Endothelial cell of umbilical vein (primary cell): ENCODE measurements at regions of chr4 and their contacts with region 1.

Region 1: DNA sequence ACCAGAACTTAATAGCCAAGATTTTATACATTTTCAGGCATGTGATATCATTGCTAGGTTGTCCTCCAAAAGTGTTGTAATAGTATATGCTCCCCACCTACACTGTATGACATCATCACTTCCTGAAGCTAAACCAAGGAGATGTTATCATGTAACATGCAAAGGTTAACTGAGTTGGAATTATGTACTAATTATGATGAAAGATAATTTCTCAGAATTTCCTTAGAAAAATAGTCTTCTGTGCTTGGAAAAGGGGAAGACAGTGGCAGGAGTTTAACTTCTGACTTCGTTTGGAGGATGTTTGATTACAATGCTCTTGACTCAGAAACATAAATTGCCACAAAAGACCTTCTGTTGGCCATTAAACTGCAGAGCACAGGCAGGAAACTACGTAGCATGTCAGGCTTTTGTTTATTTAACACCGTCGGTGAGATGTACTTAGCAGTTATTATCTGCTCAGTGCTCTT is 83.6 kb upstream of the GUCY1A1 start:
- DNase-seq: peak; percentile 91
- H3K4me3 ChIP-seq: peak overlapping the region in 1 of 3 experiments; percentile 22
- H3K27ac ChIP-seq: peak overlapping the region; percentile 60
- H3K4me1 ChIP-seq: peaks cover 20% of the 10 kb centered on the region
- H3K27me3 ChIP-seq: no peaks in the 10 kb centered on the region
- CTCF ChIP-seq: no peak
- POLR2A ChIP-seq: no peak

Region 2: GRCh38 chr4:155473420-155474095 is 109.4 kb before region 1 on chr4:
- CTCF ChIA-PET with region 1: no interaction called
- POLR2A ChIA-PET with region 1: no interaction called
- dilution Hi-C with region 1: no loop called
- intact Hi-C with region 1: loop called (anchors 1 kb)
- DNase-seq: peak; percentile 93
- H3K4me3 ChIP-seq: no peak overlapping the region
- H3K27ac ChIP-seq: peak overlapping the region; percentile 13
- H3K4me1 ChIP-seq: peaks cover 16% of the 10 kb centered on the region
- H3K27me3 ChIP-seq: no peaks in the 10 kb centered on the region
- CTCF ChIP-seq: no peak
- POLR2A ChIP-seq: no peak

Region 3: DNA sequence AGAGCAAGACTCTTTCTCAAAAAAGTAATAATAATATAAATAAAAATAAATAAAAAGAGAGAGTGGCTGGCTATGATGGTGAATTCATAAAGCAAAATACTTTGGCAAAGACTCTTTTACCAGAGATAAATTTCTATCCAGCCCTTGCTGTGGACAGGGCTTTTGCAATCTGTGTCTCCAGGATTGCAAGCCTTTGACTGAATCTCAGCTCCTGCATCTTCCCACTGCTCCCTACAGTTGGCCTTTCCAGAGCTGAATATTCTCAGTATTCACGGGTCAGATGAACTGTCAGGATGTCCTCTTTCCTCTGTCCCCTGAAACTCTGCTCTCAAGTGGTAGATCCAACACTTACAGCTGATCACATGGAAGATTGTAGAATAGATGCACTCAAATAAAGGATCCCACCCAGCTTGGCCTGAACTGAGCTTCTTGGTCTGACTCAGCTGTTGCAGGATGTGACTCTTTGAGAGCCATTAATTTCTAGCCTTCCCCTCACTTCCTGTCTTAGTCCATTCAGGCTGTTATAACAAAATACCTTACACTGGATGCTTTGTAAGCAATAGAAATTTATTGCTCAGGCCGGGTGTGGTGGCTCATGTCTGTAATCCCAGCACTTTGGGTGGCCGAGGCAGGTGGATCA is 39.8 kb before region 1 on chr4:
- CTCF ChIA-PET with region 1: interaction called, 3 read pairs
- POLR2A ChIA-PET with region 1: no interaction called
- dilution Hi-C with region 1: no loop called
- intact Hi-C with region 1: loop called (anchors 2 kb)
- DNase-seq: peak; percentile 95
- H3K4me3 ChIP-seq: no peak overlapping the region
- H3K27ac ChIP-seq: peak overlapping the region; percentile 39
- H3K4me1 ChIP-seq: peaks cover 9% of the 10 kb centered on the region
- H3K27me3 ChIP-seq: no peaks in the 10 kb centered on the region
- CTCF ChIP-seq: no peak
- POLR2A ChIP-seq: no peak

Region 4: DNA sequence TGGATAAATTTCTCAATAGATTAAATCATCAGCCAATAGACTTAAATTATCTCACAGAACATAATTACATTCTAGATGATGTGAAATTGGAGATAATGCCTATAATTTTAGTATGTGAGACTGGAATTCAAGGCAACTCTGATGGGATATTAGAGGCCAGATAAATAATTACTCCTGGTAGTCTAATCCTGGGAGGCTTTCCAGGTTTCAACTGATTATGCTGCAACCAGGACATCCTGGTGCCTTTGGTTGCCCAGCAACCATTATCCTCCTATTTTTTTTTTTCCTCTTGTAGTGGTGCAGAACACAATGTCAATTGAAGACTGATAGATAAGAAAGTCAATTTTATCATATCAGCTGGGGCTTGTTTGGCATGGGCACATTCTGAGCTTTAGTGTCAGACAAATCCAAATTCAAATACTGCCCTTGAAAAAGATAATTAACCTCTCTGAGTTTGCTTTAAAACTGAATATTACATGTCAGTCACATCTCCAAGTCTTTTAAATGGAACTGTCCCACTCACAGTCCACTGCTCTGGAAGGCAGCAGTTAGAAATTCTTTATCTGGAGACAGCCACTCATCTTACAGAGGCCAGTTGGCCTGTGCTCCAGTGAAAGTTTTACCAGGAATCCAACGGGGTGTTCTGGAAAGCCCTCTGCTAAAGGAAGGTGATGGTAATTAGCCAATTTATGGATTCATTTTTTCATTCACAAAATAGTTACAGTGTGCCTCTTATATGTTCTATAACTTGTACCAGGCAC is 11.6 kb before region 1 on chr4:
- CTCF ChIA-PET with region 1: interaction called, 3 read pairs
- POLR2A ChIA-PET with region 1: no interaction called
- dilution Hi-C with region 1: no loop called
- intact Hi-C with region 1: loop called (anchors 1 kb)
- DNase-seq: peak; percentile 54
- H3K4me3 ChIP-seq: no peak overlapping the region
- H3K27ac ChIP-seq: no peak overlapping the region
- H3K4me1 ChIP-seq: no peaks in the 10 kb centered on the region
- H3K27me3 ChIP-seq: no peaks in the 10 kb centered on the region
- CTCF ChIP-seq: no peak
- POLR2A ChIP-seq: no peak

Region 5: GRCh38 chr4:155629183-155629825 is 46.3 kb after region 1 on chr4:
- CTCF ChIA-PET with region 1: no interaction called
- POLR2A ChIA-PET with region 1: no interaction called
- dilution Hi-C with region 1: no loop called
- intact Hi-C with region 1: loop called (anchors 1 kb)
- DNase-seq: peak; percentile 93
- H3K4me3 ChIP-seq: no peak overlapping the region
- H3K27ac ChIP-seq: peak overlapping the region; percentile 11
- H3K4me1 ChIP-seq: peaks cover 15% of the 10 kb centered on the region
- H3K27me3 ChIP-seq: no peaks in the 10 kb centered on the region
- CTCF ChIP-seq: no peak
- POLR2A ChIP-seq: no peak

Region 6: DNA sequence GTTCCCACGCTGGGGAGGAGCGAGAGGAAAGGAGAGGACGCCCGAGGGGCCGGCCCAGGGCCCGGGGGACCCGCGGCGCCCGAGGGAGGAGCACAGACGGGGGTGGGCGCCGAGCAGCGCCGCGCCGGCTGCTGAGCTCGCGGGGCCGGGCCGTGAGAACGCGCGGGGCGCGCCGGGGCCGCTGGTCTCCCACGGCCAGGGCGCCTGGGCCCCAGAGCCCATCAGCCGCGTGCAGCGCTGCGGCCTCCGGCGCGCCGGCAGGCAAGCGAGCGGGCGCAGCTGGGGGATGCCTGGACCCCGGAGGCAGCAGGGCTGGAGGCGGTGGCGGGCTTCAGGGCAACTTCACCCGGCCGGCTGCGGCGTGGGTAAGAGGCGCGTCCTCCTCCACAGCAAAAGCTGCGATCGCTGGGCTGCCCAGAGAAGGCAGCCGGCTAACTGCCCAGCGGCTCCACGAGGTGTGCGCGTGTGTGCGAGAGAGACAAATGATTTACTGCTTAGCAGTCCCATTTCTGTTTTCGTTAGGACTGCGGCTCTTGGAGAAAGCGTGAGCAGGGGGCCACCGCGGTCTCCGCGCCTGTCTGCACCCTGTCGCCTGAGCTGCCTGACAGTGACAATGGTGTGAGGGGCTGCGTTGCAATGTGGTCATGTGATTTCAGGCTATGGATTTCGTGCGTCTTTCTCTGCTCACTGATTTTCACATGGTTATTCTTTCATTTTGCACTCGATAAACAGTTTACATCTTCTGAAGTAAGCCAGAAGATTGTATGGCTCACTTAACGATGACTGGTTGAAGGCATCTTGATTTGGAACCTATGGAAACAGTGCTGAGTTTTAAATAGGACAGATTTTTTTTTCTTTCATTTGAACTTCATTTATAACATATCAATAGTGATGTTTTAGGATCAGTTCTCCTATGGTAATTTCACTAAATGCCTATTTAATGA is 84.8 kb after region 1 on chr4:
- CTCF ChIA-PET with region 1: no interaction called
- POLR2A ChIA-PET with region 1: no interaction called
- dilution Hi-C with region 1: no loop called
- intact Hi-C with region 1: loop called (anchors 2 kb)
- DNase-seq: peak; percentile 66
- H3K4me3 ChIP-seq: peak overlapping the region; percentile 39 to 83 (median 46)
- H3K27ac ChIP-seq: no peak overlapping the region
- H3K4me1 ChIP-seq: peaks cover 19% of the 10 kb centered on the region
- H3K27me3 ChIP-seq: peaks cover 12 to 16% of the 10 kb centered on the region in 2 experiments
- CTCF ChIP-seq: no peak
- POLR2A ChIP-seq: no peak

Region 7: GRCh38 chr4:155974996-155975395 is 392.0 kb after region 1 on chr4:
- CTCF ChIA-PET with region 1: no interaction called
- POLR2A ChIA-PET with region 1: no interaction called
- dilution Hi-C with region 1: no loop called
- intact Hi-C with region 1: no loop called
- DNase-seq: no peak
- H3K4me3 ChIP-seq: no peak overlapping the region
- H3K27ac ChIP-seq: no peak overlapping the region
- H3K4me1 ChIP-seq: no peaks in the 10 kb centered on the region
- H3K27me3 ChIP-seq: no peaks in the 10 kb centered on the region
- CTCF ChIP-seq: no peak
- POLR2A ChIP-seq: no peak